ENCODE measurements at regions of chr11 and their contacts with region 1.

Region 1: GRCh38 chr11:72752088-72752914 is at the start of gene ARAP1:
- DNase-seq: peak; percentile 91
- H3K4me3 Mint-ChIP-seq: peak within 1 kb of the TSS; percentile 87
- H3K27ac Mint-ChIP-seq: peak within 1 kb of the TSS; percentile 94
- H3K4me1 Mint-ChIP-seq: peaks cover 24% of the 10 kb centered on the region
- H3K27me3 Mint-ChIP-seq: no peaks in the 10 kb centered on the region
- total RNA-seq, gene ARAP1: 76.9 and 81.5 TPM in 2 replicates

Region 2: DNA sequence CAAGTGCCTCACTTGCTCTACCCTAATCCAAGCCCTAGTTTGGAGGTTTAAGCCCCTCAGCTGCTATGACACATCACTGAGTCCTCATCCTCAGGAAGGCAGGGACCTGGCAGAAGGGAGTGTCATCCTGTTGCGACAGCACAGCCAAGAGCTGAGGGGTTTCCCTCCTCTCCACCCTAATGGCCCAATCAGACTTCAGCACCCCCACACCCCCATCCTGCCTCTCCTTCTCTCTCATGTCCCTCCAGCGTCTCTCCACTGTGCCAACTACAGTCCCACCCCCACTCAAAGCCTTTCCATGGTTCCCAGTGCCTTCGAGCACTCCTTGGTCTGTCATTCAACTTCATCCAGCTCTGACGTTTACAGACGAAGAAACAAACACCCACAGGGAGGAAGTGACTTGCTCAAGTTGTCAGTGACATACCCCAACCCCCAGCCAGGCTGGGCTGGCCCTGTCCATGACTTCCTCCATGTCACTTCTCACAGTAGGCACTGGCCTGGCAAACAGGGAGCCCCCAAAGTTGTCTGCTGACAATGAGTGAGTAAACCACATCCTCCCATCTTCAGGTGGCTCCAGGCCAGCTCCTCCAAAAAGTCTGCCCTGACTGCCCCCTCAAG is 15.7 kb before region 1 on chr11:
- intact Hi-C with region 1: loop called (anchors 1 kb)
- DNase-seq: peak; percentile 89
- H3K4me3 Mint-ChIP-seq: peak overlapping the region; percentile 61
- H3K27ac Mint-ChIP-seq: peak overlapping the region; percentile 91
- H3K4me1 Mint-ChIP-seq: peaks cover 44% of the 10 kb centered on the region
- H3K27me3 Mint-ChIP-seq: no peaks in the 10 kb centered on the region

Region 3: DNA sequence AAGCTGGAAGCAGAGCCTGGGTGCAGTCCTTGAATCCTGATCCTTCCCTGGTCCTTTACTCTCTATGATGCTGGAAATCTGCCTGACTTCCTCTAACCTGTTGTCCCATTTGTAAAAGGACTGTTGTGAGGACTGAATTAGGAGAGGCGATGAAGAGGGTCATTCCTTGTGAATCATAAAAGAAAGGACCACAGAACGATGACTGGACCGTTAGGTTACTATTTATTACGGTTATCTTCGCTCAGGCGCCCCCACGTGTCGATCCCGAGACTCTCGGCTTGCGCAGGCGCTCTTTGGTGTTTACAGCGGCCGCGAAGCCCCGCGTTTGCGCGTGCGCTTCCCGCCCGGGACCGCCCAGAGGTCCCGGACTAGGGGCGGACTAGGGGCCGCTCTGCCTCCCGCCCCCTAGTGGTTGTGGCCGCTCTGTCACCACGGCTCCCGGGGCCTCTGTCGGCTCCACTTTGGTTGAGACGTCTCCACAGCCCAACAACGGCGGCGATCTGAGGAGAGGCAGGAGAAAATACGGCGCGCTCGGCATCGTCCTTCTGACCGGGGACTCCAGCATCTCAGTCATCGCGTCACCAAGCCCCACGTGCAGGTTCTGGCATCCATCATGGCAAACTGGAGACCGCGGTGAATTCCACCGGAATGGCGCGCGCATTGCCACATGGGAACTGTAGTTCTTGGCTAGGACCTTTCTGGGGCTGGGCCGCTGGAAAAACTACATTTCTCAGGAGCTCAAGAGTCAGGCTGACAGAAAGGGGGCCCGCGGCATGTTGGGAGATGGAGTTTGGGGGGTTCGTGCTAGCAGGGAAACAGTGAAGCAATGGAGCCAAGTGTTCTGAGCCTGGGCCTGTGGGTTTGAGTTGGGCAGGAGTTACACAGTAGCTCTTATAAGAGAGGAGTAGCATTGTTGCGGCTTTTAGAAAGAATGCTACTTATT is 41.4 kb after region 1 on chr11 and contains the start of gene STARD10:
- intact Hi-C with region 1: loop called (anchors 2 kb)
- DNase-seq: peak; percentile 99
- H3K4me3 Mint-ChIP-seq: peak within 1 kb of the TSS; percentile 94
- H3K27ac Mint-ChIP-seq: peak within 1 kb of the TSS; percentile 99
- H3K4me1 Mint-ChIP-seq: peaks cover 23% of the 10 kb centered on the region
- H3K27me3 Mint-ChIP-seq: no peaks in the 10 kb centered on the region
- total RNA-seq, gene STARD10: 16.3 and 17.2 TPM in 2 replicates

Region 4: DNA sequence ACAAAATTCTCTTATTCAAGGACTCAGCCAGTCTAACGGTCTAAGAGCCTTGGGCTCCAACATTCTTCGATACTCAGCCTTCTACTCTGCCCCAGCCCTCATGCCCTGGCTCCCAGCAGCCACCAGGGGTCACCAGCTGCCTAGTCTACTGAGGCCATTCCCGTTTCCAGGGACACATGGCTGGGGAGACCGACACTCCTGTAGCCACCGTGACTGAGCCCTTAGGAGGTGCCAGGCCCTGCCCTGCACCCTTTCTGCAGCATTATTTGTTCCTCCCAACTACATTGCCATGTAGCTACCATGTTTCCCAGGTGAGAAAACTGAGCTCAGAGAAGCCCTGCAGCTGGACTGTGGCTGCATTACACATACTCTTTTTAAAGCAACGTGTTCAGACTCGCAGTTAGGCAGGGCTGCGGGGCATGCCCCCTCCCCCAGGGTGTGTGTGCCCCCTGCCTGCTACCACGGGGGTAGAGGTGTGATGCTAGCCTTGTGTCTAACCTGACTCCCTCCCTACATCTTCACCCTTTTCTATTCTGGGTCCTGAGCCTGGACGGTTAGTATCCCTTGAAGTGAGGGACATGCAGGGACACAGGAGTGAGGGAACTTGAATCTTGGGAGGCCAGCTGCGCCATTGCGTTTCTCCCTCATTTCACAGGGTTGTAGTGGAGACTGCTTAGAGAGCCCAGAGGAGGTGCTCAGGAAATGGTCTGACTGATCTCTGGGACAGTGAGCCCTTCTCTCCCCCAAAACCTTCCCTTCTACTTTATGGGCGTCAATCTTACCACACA is 79.4 kb after region 1 on chr11:
- intact Hi-C with region 1: no loop called
- DNase-seq: peak; percentile 85
- H3K4me3 Mint-ChIP-seq: no peak overlapping the region
- H3K27ac Mint-ChIP-seq: peak overlapping the region; percentile 37
- H3K4me1 Mint-ChIP-seq: peaks cover 21% of the 10 kb centered on the region
- H3K27me3 Mint-ChIP-seq: no peaks in the 10 kb centered on the region

Region 5: DNA sequence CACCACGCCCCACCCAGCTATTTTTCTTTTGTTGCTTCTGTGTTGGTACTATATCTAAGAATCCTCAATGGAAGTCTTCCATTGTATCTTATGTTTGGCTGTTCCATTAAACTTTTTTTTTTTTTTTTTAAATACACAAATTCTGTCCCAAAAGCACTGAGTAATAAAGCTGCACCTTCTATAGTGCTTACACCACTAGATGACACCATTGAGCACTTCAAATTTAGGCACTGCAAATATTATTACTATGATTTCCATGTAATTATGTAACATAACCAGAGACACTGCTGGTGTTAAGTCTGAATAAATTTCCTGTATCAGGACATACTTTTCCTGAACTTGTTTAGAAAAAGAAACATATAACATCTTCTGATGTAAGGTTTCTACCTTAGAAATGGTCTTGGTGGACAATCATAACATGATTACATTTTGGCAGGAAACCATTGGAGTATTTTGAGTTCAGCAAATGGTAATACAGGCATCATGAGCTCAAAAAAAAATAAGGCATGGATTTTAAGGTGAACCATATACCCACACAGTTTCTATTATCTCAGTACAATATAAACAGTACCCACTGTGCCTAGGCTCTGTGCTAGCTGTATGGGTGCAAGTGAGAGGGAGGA is 172.4 kb after region 1 on chr11:
- intact Hi-C with region 1: no loop called
- DNase-seq: no peak
- H3K4me3 Mint-ChIP-seq: no peak overlapping the region
- H3K27ac Mint-ChIP-seq: no peak overlapping the region
- H3K4me1 Mint-ChIP-seq: peaks cover 3% of the 10 kb centered on the region
- H3K27me3 Mint-ChIP-seq: no peaks in the 10 kb centered on the region